ENCODE measurements at regions of chr20 and their contacts with region 1.

Region 1: GRCh38 chr20:46013826-46014516 is 5.3 kb downstream of the MMP9 start:
- DNase-seq: peak; percentile 51
- H3K4me3 ChIP-seq: peak overlapping the region in 2 of 3 experiments; percentile 9 to 13
- H3K27ac ChIP-seq: no peak overlapping the region
- H3K4me1 ChIP-seq: peaks cover 9% of the 10 kb centered on the region
- H3K27me3 ChIP-seq: peaks cover 3% of the 10 kb centered on the region
- CTCF ChIP-seq: peak; percentile 35 to 66

Region 2: GRCh38 chr20:45857114-45857881 is 156.7 kb before region 1 on chr20 and contains the starts of genes ACOT8 and ZSWIM3:
- CTCF ChIA-PET with region 1: no interaction called
- dilution Hi-C with region 1: no loop called
- in situ Hi-C with region 1: no loop called
- intact Hi-C with region 1: no loop called
- DNase-seq: peak; percentile 100
- H3K4me3 ChIP-seq: peak within 1 kb of the TSS; percentile 73 to 76 (median 74)
- H3K27ac ChIP-seq: peak within 1 kb of the TSS; percentile 35
- H3K4me1 ChIP-seq: peaks cover 4% of the 10 kb centered on the region
- H3K27me3 ChIP-seq: no peaks in the 10 kb centered on the region
- CTCF ChIP-seq: no peak
- total RNA-seq, gene ACOT8: 22.3 to 34.0 TPM
- total RNA-seq, gene ZSWIM3: 1.9 to 5.8 TPM

Region 3: DNA sequence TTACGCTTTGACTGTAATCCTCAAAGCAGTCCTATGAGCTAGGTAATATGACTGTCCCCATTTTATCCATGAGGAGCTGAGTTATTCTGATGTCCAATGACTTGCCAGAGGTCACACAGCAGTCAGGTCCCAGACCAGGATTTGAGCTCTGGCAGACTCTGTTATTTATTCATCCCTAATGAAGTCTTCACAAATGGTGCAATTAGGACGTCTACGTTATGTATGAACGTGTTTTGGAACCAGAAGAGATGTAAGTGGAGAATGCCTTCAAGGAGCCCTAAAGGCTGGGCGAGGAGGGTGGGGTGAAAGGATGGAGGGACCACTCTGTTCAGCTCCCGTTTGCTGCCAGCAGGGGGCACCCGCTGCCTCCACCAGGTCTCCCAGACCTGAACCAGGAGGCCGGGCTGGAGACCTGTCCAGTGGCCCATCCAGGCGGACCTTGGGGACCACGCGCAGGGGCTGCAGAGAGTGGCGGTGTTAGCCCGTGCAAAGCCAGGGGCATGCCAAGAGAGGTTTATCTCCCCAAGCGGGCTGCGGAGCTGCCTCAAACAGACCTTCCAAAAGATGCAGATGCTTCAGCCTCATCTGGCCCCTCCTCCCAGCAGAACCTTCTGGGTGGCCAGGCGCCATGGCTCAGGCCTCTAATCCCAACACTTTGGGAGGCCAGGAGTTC is 26.7 kb before region 1 on chr20:
- CTCF ChIA-PET with region 1: interaction called, 6 read pairs
- dilution Hi-C with region 1: no loop called
- in situ Hi-C with region 1: no loop called
- intact Hi-C with region 1: loop called (anchors 1 kb)
- DNase-seq: peak; percentile 37
- H3K4me3 ChIP-seq: no peak overlapping the region
- H3K27ac ChIP-seq: no peak overlapping the region
- H3K4me1 ChIP-seq: no peaks in the 10 kb centered on the region
- H3K27me3 ChIP-seq: no peaks in the 10 kb centered on the region
- CTCF ChIP-seq: peak; percentile 83 to 99

Region 4: GRCh38 chr20:46174469-46175128 is 160.6 kb after region 1 on chr20:
- CTCF ChIA-PET with region 1: no interaction called
- dilution Hi-C with region 1: no loop called
- in situ Hi-C with region 1: no loop called
- intact Hi-C with region 1: loop called (anchors 2 kb)
- DNase-seq: peak; percentile 30
- H3K4me3 ChIP-seq: no peak overlapping the region
- H3K27ac ChIP-seq: no peak overlapping the region
- H3K4me1 ChIP-seq: no peaks in the 10 kb centered on the region
- H3K27me3 ChIP-seq: peaks cover 19% of the 10 kb centered on the region
- CTCF ChIP-seq: peak; percentile 44 to 76

Region 5: DNA sequence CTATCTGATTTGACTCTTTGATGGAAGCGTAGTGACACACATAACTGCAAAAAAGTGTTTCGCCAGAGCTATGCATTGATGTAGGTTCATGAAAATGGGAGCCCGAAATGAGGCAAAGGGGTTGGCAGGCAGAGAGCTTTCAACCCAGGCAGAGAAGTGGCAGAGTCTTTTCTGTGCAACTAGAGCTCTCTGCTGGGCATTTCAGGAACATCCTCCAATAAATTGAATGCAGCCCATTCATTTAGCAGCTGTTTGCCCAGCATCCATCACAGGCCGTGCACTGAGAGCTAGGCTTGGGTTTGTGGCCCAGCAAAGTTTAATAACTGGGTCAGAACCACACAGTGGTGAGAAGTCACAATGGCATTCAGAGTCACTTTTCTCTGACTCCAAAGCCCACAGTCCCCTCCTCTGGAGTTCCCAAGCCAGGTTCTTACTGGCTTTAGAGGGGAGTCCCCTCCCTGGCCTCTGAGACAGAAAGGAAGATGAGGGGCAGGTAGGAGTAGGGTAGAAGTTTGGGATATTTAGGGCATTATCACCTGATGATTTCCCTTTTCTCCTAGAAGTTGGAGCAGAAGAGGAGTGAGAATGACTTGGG is 424.3 kb after region 1 on chr20:
- CTCF ChIA-PET with region 1: no interaction called
- dilution Hi-C with region 1: no loop called
- in situ Hi-C with region 1: no loop called
- intact Hi-C with region 1: loop called (anchors 5 kb)
- DNase-seq: peak; percentile 31
- H3K4me3 ChIP-seq: no peak overlapping the region
- H3K27ac ChIP-seq: no peak overlapping the region
- H3K4me1 ChIP-seq: no peaks in the 10 kb centered on the region
- H3K27me3 ChIP-seq: no peaks in the 10 kb centered on the region
- CTCF ChIP-seq: peak; percentile 39 to 57

Measured in mammary epithelial cell (primary cell).